Activated CD8-positive, alpha-beta T cell treated with anti-CD3 and anti-CD28 coated beads for 36 hours (primary cell): ENCODE measurements at regions of chr6 and their contacts with region 1.

Region 1: GRCh38 chr6:159104163-159104925 is 59.6 kb upstream of the TAGAP start:
- DNase-seq: peak; percentile 82
- ATAC-seq: peak; percentile 62
- H3K4me3 Mint-ChIP-seq: peak overlapping the region; percentile 68
- H3K27ac Mint-ChIP-seq: peak overlapping the region; percentile 91
- H3K4me1 Mint-ChIP-seq: peaks cover 87% of the 10 kb centered on the region
- H3K27me3 Mint-ChIP-seq: no peaks in the 10 kb centered on the region
- CTCF ChIP-seq: peak; percentile 97

Region 2: GRCh38 chr6:158938811-158939254 is 165.5 kb before region 1 on chr6:
- CTCF ChIA-PET with region 1: no interaction called
- POLR2A ChIA-PET with region 1: no interaction called
- intact Hi-C with region 1: no loop called
- DNase-seq: peak; percentile 52
- ATAC-seq: peak; percentile 77
- H3K4me3 Mint-ChIP-seq: peak overlapping the region; percentile 67
- H3K27ac Mint-ChIP-seq: no peak overlapping the region
- H3K4me1 Mint-ChIP-seq: peaks cover 10% of the 10 kb centered on the region
- H3K27me3 Mint-ChIP-seq: peaks cover 6% of the 10 kb centered on the region
- CTCF ChIP-seq: no peak

Region 3: DNA sequence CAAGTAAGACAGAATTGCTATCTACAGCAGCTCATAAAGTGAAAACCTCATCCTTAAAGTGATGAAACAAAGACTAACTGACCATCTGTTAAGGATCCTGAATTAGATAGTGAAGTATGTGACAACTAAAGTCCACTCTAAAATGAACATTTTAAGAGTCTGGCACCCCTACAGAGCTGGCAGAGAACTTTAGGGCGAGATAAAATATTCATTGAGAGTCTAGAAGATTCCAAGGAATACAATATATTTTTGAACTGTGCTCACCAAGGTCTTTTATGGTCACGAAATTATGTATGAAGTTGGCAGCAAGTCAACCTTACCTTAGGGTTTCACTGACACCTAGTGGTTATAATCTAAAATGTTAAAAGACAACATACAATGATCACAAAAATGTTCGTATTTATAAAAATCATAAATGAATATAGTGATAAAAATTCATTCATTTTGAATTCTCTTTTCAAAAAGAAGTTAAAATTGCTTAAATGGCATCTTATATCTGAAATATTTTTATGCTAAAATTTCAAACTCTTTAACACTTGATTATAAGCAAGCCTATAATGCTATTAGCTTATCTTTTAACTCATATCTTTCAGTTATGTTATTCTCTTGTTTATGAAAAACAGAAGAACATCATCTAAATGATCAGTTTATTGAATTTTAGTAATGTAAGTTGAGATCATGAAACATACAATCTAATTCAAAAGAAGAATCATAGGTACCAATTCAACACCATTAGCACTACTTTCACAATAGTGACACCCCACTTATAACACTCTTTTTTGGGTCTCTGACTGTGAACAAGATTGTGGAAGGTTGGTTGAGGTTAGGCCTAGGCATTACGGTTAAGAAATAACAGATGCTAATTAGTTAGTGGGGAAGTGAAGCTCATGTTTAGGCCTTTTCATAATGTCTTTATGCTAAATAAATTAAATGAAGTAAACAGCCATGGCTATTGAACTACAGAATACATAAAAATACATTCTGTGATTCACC is 131.8 kb before region 1 on chr6:
- CTCF ChIA-PET with region 1: interaction called, 21 read pairs
- POLR2A ChIA-PET with region 1: no interaction called
- intact Hi-C with region 1: no loop called
- DNase-seq: no peak
- ATAC-seq: peak; percentile 71
- H3K4me3 Mint-ChIP-seq: no peak overlapping the region
- H3K27ac Mint-ChIP-seq: no peak overlapping the region
- H3K4me1 Mint-ChIP-seq: no peaks in the 10 kb centered on the region
- H3K27me3 Mint-ChIP-seq: no peaks in the 10 kb centered on the region
- CTCF ChIP-seq: peak; percentile 81

Region 4: DNA sequence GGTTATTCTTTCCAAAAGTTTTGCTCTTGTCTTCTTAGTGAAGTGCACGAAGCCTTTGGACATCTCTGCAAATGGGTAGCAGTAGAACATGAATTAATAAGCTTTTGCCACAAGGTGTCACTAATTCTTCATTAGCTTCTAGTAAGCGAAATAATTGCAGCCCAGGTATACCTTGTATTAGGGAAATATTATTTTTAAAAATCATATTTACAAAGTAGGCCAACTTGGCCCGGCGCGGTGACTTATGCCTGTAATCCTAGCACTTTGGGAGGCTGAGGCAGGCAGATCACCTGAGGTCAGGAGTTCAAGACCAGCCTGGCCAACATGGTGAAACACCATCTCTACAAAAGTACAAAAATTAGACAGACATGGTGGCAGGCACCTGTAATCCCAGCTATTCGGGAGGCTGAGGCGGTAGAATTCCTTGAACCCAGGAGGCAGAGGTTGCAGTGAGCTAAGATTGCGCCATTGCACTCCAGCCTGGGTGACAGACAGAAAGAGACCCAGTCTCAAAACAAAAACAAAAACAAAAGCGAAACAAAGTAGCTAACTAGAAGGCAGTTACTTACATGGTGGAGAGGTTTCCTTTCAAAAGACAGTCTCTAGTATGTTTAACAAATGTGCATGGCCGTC is 95.6 kb before region 1 on chr6:
- CTCF ChIA-PET with region 1: interaction called, 506 read pairs
- POLR2A ChIA-PET with region 1: interaction called, 5 read pairs
- intact Hi-C with region 1: loop called (anchors 2 kb)
- DNase-seq: no peak
- ATAC-seq: peak; percentile 76
- H3K4me3 Mint-ChIP-seq: no peak overlapping the region
- H3K27ac Mint-ChIP-seq: peak overlapping the region; percentile 65
- H3K4me1 Mint-ChIP-seq: peaks cover 28% of the 10 kb centered on the region
- H3K27me3 Mint-ChIP-seq: no peaks in the 10 kb centered on the region
- CTCF ChIP-seq: peak; percentile 83

Region 5: GRCh38 chr6:159023893-159024292 is 80.5 kb before region 1 on chr6:
- CTCF ChIA-PET with region 1: interaction called, 506 read pairs
- POLR2A ChIA-PET with region 1: interaction called, 18 read pairs
- intact Hi-C with region 1: no loop called
- DNase-seq: peak; percentile 76
- ATAC-seq: peak; percentile 97
- H3K4me3 Mint-ChIP-seq: no peak overlapping the region
- H3K27ac Mint-ChIP-seq: peak overlapping the region; percentile 93
- H3K4me1 Mint-ChIP-seq: peaks cover 37% of the 10 kb centered on the region
- H3K27me3 Mint-ChIP-seq: no peaks in the 10 kb centered on the region
- CTCF ChIP-seq: no peak

Region 6: DNA sequence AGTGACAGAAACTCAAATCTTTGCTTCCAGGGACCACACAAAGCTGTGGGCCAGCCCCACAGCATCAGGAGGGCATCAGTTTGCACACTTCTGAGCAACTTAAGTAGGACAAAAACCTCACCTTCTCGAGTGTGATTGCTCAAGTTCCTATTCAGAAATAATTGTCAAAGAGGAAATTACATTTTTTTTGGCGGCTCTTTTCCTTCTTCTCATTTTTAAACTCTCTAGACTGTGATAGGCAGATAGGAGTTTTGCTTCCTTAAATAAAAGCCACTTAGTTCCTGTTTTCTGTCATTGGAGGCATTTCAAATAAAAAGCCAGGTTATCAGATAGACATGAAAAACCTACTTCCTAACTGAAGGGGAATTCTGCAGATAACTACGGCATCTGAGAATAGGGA is 48.3 kb before region 1 on chr6:
- CTCF ChIA-PET with region 1: interaction called, 12 read pairs
- POLR2A ChIA-PET with region 1: interaction called, 216 read pairs
- intact Hi-C with region 1: no loop called
- DNase-seq: no peak
- ATAC-seq: no peak
- H3K4me3 Mint-ChIP-seq: peak overlapping the region; percentile 59
- H3K27ac Mint-ChIP-seq: peak overlapping the region; percentile 95
- H3K4me1 Mint-ChIP-seq: peaks cover 82% of the 10 kb centered on the region
- H3K27me3 Mint-ChIP-seq: no peaks in the 10 kb centered on the region
- CTCF ChIP-seq: no peak

Region 7: GRCh38 chr6:159084493-159085091 is 19.8 kb before region 1 on chr6:
- CTCF ChIA-PET with region 1: interaction called, 29 read pairs
- POLR2A ChIA-PET with region 1: interaction called, 172 read pairs
- intact Hi-C with region 1: no loop called
- DNase-seq: no peak
- ATAC-seq: no peak
- H3K4me3 Mint-ChIP-seq: no peak overlapping the region
- H3K27ac Mint-ChIP-seq: peak overlapping the region; percentile 78
- H3K4me1 Mint-ChIP-seq: peaks cover 58% of the 10 kb centered on the region
- H3K27me3 Mint-ChIP-seq: no peaks in the 10 kb centered on the region
- CTCF ChIP-seq: no peak

Region 8: DNA sequence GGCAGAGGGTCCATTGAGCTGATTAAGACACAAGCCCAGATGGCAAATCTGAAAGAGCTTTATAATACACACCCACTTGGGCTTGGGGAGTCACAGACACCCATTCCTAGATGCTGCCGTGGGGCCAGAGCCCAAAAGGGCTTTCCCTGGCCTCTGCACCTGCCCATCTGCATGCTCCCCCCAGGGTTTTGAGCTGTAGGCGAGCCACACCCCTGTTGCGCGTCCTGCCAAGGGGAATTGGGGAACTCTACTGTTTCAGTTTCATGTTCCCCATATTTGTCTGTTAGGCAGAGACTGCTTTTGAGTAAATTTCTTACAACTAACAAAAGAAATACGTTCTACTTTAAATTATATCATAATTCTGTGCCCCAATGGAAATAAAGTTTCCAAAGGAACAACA is 12.0 kb after region 1 on chr6:
- CTCF ChIA-PET with region 1: interaction called, 10 read pairs
- POLR2A ChIA-PET with region 1: no interaction called
- intact Hi-C with region 1: no loop called
- DNase-seq: no peak
- ATAC-seq: no peak
- H3K4me3 Mint-ChIP-seq: no peak overlapping the region
- H3K27ac Mint-ChIP-seq: no peak overlapping the region
- H3K4me1 Mint-ChIP-seq: no peaks in the 10 kb centered on the region
- H3K27me3 Mint-ChIP-seq: no peaks in the 10 kb centered on the region
- CTCF ChIP-seq: no peak